Activated naive CD8-positive, alpha-beta T cell treated with anti-CD3 and anti-CD28 coated beads, Interleukin-2, amount 10 ng/mL, durations not matched to agents 7 days and 5 days (primary cell): ENCODE measurements at regions of chr1 and their contacts with region 1.

Region 1: GRCh38 chr1:150876119-150876454 is 312 bp downstream of the ARNT start:
- DNase-seq: no peak
- ATAC-seq: peak; percentile 48
- H3K4me3 Mint-ChIP-seq: peak overlapping the region; percentile 96
- H3K27ac Mint-ChIP-seq: peak overlapping the region; percentile 97
- H3K4me1 Mint-ChIP-seq: peaks cover 20% of the 10 kb centered on the region
- H3K27me3 Mint-ChIP-seq: no peaks in the 10 kb centered on the region

Region 2: DNA sequence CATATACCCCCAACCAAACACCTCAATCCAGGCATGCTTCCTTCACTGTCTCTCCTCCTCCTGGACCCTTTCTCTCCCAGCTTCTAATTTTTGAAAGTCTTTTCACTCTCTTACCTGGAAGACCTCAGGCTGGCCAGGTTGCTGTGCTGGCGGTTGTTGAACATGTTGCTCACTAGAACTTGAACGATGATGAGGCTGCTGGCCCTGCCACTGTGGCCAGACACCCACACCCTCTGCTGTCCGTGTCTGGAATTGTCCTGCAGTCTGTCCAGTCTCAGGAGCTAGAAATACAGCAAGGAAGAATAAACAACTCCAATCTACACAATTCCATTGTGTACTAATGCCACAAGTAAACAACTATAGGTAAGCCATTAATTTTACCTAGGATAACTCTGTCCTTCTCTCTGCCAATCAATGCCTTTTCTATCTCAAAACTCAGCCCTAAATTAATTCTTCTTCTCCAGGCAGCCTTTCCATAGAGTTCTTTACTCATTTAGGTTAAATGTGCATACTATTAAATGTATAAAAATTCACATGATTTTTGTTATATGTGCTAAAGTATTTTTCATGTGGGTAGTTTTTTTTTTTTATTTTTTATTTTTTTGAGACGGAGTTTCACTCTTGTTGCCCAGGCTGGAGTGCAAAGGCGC is 62.9 kb before region 1 on chr1:
- POLR2A ChIA-PET with region 1: no interaction called
- DNase-seq: no peak
- ATAC-seq: no peak
- H3K4me3 Mint-ChIP-seq: no peak overlapping the region
- H3K27ac Mint-ChIP-seq: no peak overlapping the region
- H3K4me1 Mint-ChIP-seq: peaks cover under 1% of the 10 kb centered on the region
- H3K27me3 Mint-ChIP-seq: no peaks in the 10 kb centered on the region

Region 3: DNA sequence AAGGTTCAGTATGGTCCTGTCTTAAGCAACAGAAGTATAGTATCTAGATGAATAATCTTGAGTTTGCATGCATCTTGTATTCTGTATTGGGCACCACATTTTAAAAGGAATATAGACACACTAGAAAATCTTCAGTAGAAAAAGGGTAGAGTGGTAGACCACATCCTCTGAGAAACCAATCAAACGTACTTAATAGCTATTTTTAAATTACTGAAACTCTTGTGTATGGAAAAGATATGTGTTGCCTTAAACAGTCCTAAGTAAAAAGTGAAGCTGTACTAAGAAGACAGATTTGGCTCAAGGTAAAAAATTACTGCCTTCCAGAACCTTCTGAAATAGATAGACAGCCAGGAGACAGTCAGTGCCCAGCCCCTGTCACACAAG is 13.9 kb after region 1 on chr1:
- POLR2A ChIA-PET with region 1: interaction called, 28 read pairs
- DNase-seq: no peak
- ATAC-seq: peak; percentile 83
- H3K4me3 Mint-ChIP-seq: peak overlapping the region; percentile 60
- H3K27ac Mint-ChIP-seq: peak overlapping the region; percentile 77
- H3K4me1 Mint-ChIP-seq: peaks cover 28% of the 10 kb centered on the region
- H3K27me3 Mint-ChIP-seq: peaks cover 2% of the 10 kb centered on the region

Region 4: GRCh38 chr1:150902356-150903140 is 26.5 kb after region 1 on chr1:
- POLR2A ChIA-PET with region 1: no interaction called
- DNase-seq: no peak
- ATAC-seq: no peak
- H3K4me3 Mint-ChIP-seq: no peak overlapping the region
- H3K27ac Mint-ChIP-seq: no peak overlapping the region
- H3K4me1 Mint-ChIP-seq: no peaks in the 10 kb centered on the region
- H3K27me3 Mint-ChIP-seq: no peaks in the 10 kb centered on the region